SK-N-SH (cell line): ENCODE measurements at regions of chr11 and their contacts with region 1.

Region 1: GRCh38 chr11:119474682-119475596 is 52.0 kb upstream of the THY1 start:
- DNase-seq: peak; percentile 86
- H3K4me3 ChIP-seq: no peak overlapping the region; a peak in 1 of 4 replicates
- H3K27ac ChIP-seq: no peak overlapping the region
- H3K4me1 ChIP-seq: peaks cover 19 to 26% of the 10 kb centered on the region in 2 experiments; a peak in 3 of 4 replicates
- H3K27me3 ChIP-seq: 0 out of 2 replicates have a peak, but pooled peaks cover 6% of the 10 kb centered on the region
- CTCF ChIP-seq: peak; percentile 96
- EP300 ChIP-seq: no peak
- RAD21 ChIP-seq: peak; percentile 98

Region 2: GRCh38 chr11:119347242-119347641 is 127.7 kb before region 1 on chr11:
- CTCF ChIA-PET with region 1: interaction called, 88 read pairs
- POLR2A ChIA-PET with region 1: no interaction called
- DNase-seq: no peak
- H3K4me3 ChIP-seq: no peak overlapping the region
- H3K27ac ChIP-seq: no peak overlapping the region
- H3K4me1 ChIP-seq: peaks cover 0 to 9% of the 10 kb centered on the region in 2 experiments; a peak in 1 of 4 replicates
- H3K27me3 ChIP-seq: no peaks in the 10 kb centered on the region; the same call in 1 of the 2 replicates
- CTCF ChIP-seq: no peak
- EP300 ChIP-seq: no peak
- RAD21 ChIP-seq: no peak

Region 3: DNA sequence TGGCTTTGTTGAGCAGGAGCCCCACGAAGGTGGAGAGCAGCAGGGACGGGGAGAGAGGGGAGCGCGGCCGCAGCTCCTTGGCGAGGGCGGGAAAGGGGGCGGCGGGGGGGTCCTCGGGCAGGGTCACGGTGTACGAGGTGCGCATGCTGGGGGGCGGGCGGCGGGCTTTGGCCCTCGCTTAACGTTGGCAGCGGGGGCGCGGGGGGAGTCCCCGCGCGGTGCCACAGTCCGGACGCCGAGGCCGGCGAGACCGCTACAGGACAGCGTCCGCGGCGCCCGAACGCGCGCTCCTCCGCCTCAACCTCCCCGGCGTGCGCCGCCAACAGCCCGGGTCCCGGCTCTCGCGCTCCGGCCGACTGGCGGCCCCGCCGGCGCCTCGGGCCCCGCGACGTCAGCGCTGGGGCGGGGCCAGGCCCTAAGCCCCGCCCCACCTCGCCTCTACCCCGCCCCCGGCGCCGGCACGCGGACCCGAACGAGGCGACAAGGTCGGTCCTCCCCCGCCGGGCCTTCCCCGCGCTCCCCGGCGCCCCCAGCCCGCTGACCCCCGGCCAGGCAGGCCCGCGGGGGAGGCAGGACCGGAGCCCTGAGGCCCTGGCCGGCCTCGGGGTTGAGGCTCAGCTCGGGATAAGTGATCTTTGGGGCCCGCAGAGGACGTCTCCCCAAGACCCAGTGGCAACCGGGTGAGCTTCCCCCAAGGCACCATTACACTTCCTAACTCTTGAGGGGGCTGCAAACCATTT is 110.9 kb before region 1 on chr11:
- CTCF ChIA-PET with region 1: interaction called, 390 read pairs
- POLR2A ChIA-PET with region 1: no interaction called
- DNase-seq: peak; percentile 97
- H3K4me3 ChIP-seq: peak overlapping the region in 1 of 2 experiments; percentile 49; a peak in 2 of 4 replicates
- H3K27ac ChIP-seq: no peak overlapping the region; a peak in 1 of 4 replicates
- H3K4me1 ChIP-seq: peaks cover 37 to 69% of the 10 kb centered on the region in 2 experiments; a peak in 3 of 4 replicates
- H3K27me3 ChIP-seq: no peaks in the 10 kb centered on the region
- CTCF ChIP-seq: no peak
- EP300 ChIP-seq: no peak
- RAD21 ChIP-seq: no peak

Region 4: DNA sequence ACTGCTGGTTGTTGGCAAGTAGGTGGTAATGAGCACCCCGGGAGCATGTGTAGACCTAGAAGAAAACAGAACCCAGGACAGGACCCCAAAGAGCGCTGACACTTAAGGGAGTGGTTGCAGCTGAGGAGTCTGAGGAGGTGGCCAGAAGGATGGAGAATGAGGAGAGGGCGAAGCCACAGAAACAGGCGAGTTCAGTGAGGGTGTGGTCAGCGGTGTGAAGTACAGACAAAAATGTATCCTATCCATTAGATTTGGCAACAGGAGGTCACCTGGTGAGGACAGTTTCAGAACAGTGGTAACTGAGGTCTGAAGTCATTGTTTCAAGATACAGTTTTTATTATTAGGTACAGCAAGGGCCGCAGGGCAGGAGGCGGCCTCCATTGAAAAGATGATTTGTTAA is 43.4 kb before region 1 on chr11:
- CTCF ChIA-PET with region 1: interaction called, 60 read pairs
- POLR2A ChIA-PET with region 1: no interaction called
- DNase-seq: no peak
- H3K4me3 ChIP-seq: no peak overlapping the region
- H3K27ac ChIP-seq: peak overlapping the region in 1 of 2 experiments; percentile 94; a peak in 3 of 4 replicates
- H3K4me1 ChIP-seq: peaks cover 14 to 20% of the 10 kb centered on the region in 2 experiments; a peak in 3 of 4 replicates
- H3K27me3 ChIP-seq: no peaks in the 10 kb centered on the region
- CTCF ChIP-seq: no peak
- EP300 ChIP-seq: no peak
- RAD21 ChIP-seq: no peak

Region 5: DNA sequence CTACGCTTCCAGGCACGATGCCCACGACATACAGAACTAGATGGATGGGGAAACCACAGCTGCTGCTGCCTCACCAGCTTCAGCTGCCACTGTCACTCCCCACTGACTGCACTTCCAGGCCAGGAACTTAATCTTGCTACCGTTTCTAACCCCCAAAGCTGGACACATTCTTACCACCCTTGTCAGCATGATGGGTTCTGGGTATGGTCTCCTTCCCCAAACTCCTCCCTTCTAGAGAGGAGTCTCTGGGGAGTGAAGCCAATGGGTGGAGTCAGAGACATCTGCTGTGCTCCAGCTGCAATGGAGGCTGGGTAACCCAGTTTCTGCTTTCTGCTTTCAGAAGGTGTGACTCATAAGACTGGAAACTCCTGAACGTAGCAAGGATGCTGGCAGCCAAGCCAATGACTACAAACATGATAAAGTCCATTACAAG is 35.0 kb after region 1 on chr11:
- CTCF ChIA-PET with region 1: interaction called, 10 read pairs
- POLR2A ChIA-PET with region 1: no interaction called
- DNase-seq: no peak
- H3K4me3 ChIP-seq: no peak overlapping the region
- H3K27ac ChIP-seq: no peak overlapping the region
- H3K4me1 ChIP-seq: peaks cover 0 to 27% of the 10 kb centered on the region in 2 experiments; a peak in 1 of 4 replicates
- H3K27me3 ChIP-seq: no peaks in the 10 kb centered on the region; the same call in 1 of the 2 replicates
- CTCF ChIP-seq: no peak
- EP300 ChIP-seq: no peak
- RAD21 ChIP-seq: no peak